B cell (primary cell): ENCODE measurements at regions of chr17 and their contacts with region 1.

Region 1: GRCh38 chr17:76481071-76481655 is 13.8 kb downstream of the AANAT start:
- DNase-seq: peak; percentile 88
- ATAC-seq: peak; percentile 57
- H3K4me3 ChIP-seq: peak overlapping the region; percentile 15 to 70 (median 53)
- H3K4me3 Mint-ChIP-seq: peak overlapping the region; percentile 81
- H3K27ac ChIP-seq: peak overlapping the region; percentile 91 to 96
- H3K27ac Mint-ChIP-seq: peak overlapping the region; percentile 99
- H3K4me1 ChIP-seq: peaks cover 63 to 87% of the 10 kb centered on the region in 2 donors
- H3K4me1 Mint-ChIP-seq: peaks cover 67% of the 10 kb centered on the region
- H3K27me3 ChIP-seq: no peaks in the 10 kb centered on the region
- H3K27me3 Mint-ChIP-seq: no peaks in the 10 kb centered on the region
- CTCF ChIP-seq: no peak

Region 2: GRCh38 chr17:76492989-76493501 is 11.9 kb after region 1 on chr17:
- CTCF ChIA-PET with region 1: interaction called, 256 read pairs
- POLR2A ChIA-PET with region 1: interaction called, 478 read pairs
- intact Hi-C with region 1: loop called (anchors 1 kb)
- DNase-seq: peak; percentile 83
- ATAC-seq: peak; percentile 50
- H3K4me3 ChIP-seq: peak overlapping the region; percentile 16 to 60 (median 50)
- H3K4me3 Mint-ChIP-seq: peak overlapping the region; percentile 89
- H3K27ac ChIP-seq: peak overlapping the region; percentile 75 to 94
- H3K27ac Mint-ChIP-seq: peak overlapping the region; percentile 98
- H3K4me1 ChIP-seq: peaks cover 87 to 98% of the 10 kb centered on the region in 2 donors
- H3K4me1 Mint-ChIP-seq: peaks cover 93% of the 10 kb centered on the region
- H3K27me3 ChIP-seq: no peaks in the 10 kb centered on the region
- H3K27me3 Mint-ChIP-seq: no peaks in the 10 kb centered on the region
- CTCF ChIP-seq: no peak

Region 3: DNA sequence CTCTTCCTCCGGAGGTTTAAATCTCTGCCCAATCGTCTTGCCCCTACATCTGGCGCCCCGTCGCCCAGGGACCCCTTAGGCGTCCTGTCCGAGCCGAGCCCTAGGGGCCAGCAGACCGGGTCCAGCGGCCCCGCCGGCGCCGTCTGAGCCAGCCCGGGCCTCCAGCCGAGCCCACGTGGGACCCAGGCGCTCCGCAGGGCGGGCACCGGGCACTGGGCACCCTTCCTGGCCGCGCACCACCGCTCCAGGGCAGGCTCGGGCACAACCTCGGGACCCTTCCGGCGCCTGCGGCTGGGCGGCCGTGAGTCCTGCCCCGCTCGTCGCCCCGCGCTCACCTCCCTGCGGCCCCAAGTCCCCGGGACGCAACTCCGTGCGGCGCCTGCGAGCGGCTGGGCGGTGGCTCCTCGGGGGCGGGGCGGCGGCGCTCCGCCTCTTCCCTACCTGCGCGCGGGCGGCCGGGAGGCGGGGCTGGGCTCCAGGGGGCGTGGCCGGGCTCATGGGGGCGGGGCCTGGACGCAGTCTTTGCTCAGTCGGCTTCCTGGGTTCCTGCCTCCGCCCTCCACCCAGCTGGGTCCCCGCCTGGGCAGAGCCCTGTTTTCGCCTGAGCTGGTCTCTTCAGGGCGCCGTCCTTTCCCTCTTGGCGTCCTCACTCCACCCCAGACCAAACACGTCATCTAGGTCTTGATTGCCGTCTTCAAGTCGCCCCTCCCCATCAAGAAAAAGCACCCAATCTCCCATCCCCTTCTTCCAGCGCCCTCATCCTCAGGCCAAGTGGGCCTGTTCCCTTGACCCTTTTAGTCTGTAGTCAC is 20.1 kb after region 1 on chr17 and contains the start of gene RHBDF2:
- CTCF ChIA-PET with region 1: interaction called, 256 read pairs
- POLR2A ChIA-PET with region 1: interaction called, 478 read pairs
- intact Hi-C with region 1: loop called (anchors 1 kb)
- DNase-seq: peak; percentile 95
- ATAC-seq: peak; percentile 85
- H3K4me3 ChIP-seq: peak within 1 kb of the TSS; percentile 46 to 97 (median 95)
- H3K4me3 Mint-ChIP-seq: peak within 1 kb of the TSS; percentile 97
- H3K27ac ChIP-seq: peak within 1 kb of the TSS; percentile 78 to 94
- H3K27ac Mint-ChIP-seq: peak within 1 kb of the TSS; percentile 99
- H3K4me1 ChIP-seq: peaks cover 38 to 63% of the 10 kb centered on the region in 2 donors
- H3K4me1 Mint-ChIP-seq: peaks cover 56% of the 10 kb centered on the region
- H3K27me3 ChIP-seq: no peaks in the 10 kb centered on the region
- H3K27me3 Mint-ChIP-seq: no peaks in the 10 kb centered on the region
- CTCF ChIP-seq: no peak
- total RNA-seq, gene RHBDF2: 482 and 509 TPM in 2 replicates

Region 4: GRCh38 chr17:76515274-76515949 is 34.2 kb after region 1 on chr17:
- CTCF ChIA-PET with region 1: interaction called, 256 read pairs
- POLR2A ChIA-PET with region 1: interaction called, 6 read pairs
- intact Hi-C with region 1: loop called (anchors 1 kb)
- DNase-seq: peak; percentile 93
- ATAC-seq: peak; percentile 87
- H3K4me3 ChIP-seq: peak overlapping the region in 4 of 5 experiments; percentile 21 to 38 (median 26)
- H3K4me3 Mint-ChIP-seq: peak overlapping the region; percentile 85
- H3K27ac ChIP-seq: peak overlapping the region; percentile 71 to 84
- H3K27ac Mint-ChIP-seq: peak overlapping the region; percentile 98
- H3K4me1 ChIP-seq: peaks cover 17 to 18% of the 10 kb centered on the region in 2 donors
- H3K4me1 Mint-ChIP-seq: peaks cover 31% of the 10 kb centered on the region
- H3K27me3 ChIP-seq: peaks cover 0 to 1% (median 0%) of the 10 kb centered on the region in 4 experiments
- H3K27me3 Mint-ChIP-seq: no peaks in the 10 kb centered on the region
- CTCF ChIP-seq: no peak